Aorta (tissue), 5 donors: ENCODE measurements at regions of chr19 and their contacts with region 1.

Region 1: DNA sequence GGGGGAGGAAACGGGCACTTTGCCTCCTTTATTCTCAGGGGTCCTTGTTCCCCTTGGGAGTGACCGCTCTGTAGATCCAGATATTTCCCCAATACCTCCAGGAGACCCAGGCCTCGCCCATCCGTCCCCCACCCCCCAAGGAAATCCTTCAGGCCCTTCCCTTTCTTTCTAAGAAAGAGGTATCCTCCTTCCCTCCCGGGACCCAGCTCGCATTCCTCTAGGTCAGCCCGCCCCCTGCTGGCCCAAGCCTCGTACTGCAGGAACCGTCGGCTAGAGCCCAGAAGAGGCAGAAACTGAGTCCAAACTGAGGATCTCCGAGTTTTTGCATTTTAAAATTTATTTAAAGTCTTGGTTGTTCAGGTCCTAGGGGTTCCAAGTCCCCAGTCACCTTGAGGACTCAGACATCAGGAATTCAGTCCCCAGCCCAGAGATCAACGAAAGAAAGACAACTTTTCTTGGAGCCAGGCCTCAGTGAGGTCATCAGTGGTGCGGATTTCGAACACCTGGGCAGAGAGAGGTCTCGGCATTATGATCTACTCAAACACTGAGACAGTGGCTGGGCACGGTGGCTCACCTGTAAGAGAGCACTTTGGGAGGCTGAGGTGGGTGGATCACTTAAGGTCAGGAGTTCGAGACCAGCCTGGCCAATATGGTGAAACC is 7.5 kb upstream of the LRFN1 start:
- DNase-seq: peak; percentile 85 to 95
- ATAC-seq: peak; percentile 87
- H3K4me3 ChIP-seq: no peak overlapping the region
- H3K27ac ChIP-seq: no peak overlapping the region
- H3K4me1 ChIP-seq: no peaks in the 10 kb centered on the region
- H3K27me3 ChIP-seq: no peaks in the 10 kb centered on the region

Region 2: DNA sequence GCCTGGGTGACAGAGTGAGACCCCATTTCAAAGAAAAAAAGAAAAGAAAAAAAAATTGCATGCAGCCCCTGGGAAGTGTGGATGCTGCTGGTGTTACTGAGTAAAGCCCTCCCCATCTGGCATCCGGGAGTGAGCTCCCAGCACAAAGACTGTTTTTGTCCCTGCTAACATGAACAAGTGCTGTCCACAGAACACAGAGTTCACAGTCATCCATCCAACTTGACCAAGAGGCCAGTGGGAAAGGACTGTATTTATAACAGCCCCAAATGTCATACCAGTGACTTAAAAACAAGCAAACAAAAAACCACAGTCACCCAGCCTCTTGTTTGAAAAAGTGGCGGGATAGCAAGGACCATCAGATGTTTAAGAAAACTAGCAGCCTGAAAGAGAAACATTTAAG is 363.4 kb before region 1 on chr19:
- intact Hi-C with region 1: loop called in 1 of 2 experiments (anchors 5 kb)
- DNase-seq: no peak
- ATAC-seq: no peak
- H3K4me3 ChIP-seq: no peak overlapping the region
- H3K27ac ChIP-seq: no peak overlapping the region
- H3K4me1 ChIP-seq: no peaks in the 10 kb centered on the region
- H3K27me3 ChIP-seq: no peaks in the 10 kb centered on the region

Region 3: GRCh38 chr19:39119554-39120229 is 208.5 kb before region 1 on chr19:
- intact Hi-C with region 1: loop called (anchors 2 to 5 kb)
- DNase-seq: no peak
- ATAC-seq: no peak
- H3K4me3 ChIP-seq: no peak overlapping the region
- H3K27ac ChIP-seq: no peak overlapping the region
- H3K4me1 ChIP-seq: no peaks in the 10 kb centered on the region
- H3K27me3 ChIP-seq: no peaks in the 10 kb centered on the region

Region 4: DNA sequence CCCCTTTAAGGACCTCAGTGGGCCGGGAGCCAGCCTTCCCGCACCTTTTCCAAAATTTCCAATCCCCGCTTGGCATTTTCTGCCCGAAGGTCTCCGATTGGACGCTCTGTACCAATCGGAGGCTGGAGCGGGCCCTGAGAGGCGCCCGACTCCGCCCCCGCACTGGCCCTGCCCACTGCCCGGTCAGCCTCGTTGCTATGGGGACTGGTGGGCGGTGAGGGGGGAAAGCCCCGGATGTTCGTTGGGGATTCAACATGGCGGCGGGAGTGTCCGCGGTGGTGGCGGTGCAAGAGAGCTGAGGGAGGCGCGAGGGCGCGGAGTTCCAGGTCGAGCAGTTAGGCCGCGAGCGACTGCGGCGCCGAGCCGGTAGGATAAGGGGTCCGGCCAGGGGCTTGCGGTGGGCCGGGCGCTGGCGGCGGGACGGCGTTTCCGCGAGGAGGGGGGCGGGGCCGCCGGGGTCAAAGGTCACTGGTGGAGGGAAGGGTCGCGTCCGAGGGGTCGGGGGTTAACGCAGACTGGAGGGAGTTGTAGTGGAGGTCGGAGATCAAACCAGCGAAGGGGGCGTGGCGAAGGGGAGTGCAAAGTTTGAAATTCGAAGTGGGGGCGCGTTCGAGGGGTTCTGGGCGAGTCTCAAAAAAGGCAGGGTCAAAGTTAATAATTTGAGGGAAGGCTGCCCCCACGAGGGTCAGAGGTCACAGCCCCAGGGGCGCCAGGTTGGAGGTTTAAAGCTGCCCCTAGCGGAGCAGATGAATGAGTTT is 202.4 kb before region 1 on chr19 and contains the start of gene PAK4:
- intact Hi-C with region 1: loop called (anchors 2 to 5 kb)
- DNase-seq: peak; percentile 98 to 99
- ATAC-seq: peak; percentile 97
- H3K4me3 ChIP-seq: peak within 1 kb of the TSS; percentile 63 to 69
- H3K27ac ChIP-seq: no peak within 1 kb of the TSS
- H3K4me1 ChIP-seq: no peaks in the 10 kb centered on the region
- H3K27me3 ChIP-seq: no peaks in the 10 kb centered on the region
- total RNA-seq, gene PAK4: 15.9 to 22.2 TPM